ENCODE measurements at regions of chr12 and their contacts with region 1.

Region 1: DNA sequence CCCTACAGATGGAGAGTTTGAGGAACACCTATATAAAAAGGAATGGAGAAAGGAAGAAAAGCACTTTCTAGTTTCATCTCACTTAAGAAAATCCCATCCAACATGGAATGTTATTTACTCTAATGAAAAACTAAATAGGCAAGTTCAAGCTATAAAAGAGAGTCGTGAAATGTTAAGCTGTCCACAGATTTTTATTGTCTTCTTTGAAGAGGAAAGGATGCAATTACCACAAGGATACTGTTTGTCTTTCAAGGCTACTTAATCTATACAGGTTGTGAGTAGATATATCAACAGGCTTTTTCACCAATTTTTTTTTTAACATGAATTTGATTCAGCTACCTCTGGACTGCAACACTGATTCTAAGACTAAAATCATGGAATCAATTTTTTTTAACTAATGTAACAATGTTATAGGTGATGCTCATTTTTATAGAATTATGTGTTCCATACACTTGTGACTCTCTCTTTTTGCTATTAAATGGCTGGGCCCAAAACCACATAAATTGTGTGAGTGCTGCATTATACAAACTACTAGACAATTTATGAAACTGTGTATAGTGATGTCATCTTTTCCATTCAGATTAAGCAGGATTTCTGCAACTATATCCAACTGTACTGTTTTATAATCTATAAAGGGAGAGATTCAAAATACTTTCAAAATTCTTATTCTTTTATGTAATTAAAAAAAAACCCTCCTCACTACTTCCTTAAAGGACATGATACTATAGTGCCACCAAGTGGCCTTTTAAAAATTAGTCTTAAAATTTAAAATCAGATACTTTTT is 26.8 kb upstream of the BMAL2 start:
- DNase-seq: no peak
- H3K4me3 ChIP-seq: no peak overlapping the region
- H3K27ac ChIP-seq: no peak overlapping the region
- H3K4me1 ChIP-seq: no peaks in the 10 kb centered on the region
- H3K27me3 ChIP-seq: no peaks in the 10 kb centered on the region
- CTCF ChIP-seq: peak in 1 of 3 experiments; percentile 21; a peak in 1 of 4 replicates
- EP300 ChIP-seq: no peak
- POLR2A ChIP-seq: no peak
- RAD21 ChIP-seq: peak in 1 of 2 experiments; percentile 41; a peak in 3 of 4 replicates

Region 2: GRCh38 chr12:26691234-26691970 is 614.5 kb before region 1 on chr12:
- CTCF ChIA-PET with region 1: no interaction called
- POLR2A ChIA-PET with region 1: no interaction called
- DNase-seq: peak in 1 of 2 experiments; percentile 51
- H3K4me3 ChIP-seq: no peak overlapping the region
- H3K27ac ChIP-seq: no peak overlapping the region; the same call in 1 of the 2 replicates
- H3K4me1 ChIP-seq: peaks cover 0 to 8% (median 6%) of the 10 kb centered on the region in 4 experiments; a peak in 4 of 7 replicates
- H3K27me3 ChIP-seq: no peaks in the 10 kb centered on the region
- CTCF ChIP-seq: no peak
- EP300 ChIP-seq: 0 out of 3 replicates have a peak, but pooled peaks of 1 of the 2 experiments have one; percentile 43
- POLR2A ChIP-seq: no peak
- RAD21 ChIP-seq: no peak

Region 3: DNA sequence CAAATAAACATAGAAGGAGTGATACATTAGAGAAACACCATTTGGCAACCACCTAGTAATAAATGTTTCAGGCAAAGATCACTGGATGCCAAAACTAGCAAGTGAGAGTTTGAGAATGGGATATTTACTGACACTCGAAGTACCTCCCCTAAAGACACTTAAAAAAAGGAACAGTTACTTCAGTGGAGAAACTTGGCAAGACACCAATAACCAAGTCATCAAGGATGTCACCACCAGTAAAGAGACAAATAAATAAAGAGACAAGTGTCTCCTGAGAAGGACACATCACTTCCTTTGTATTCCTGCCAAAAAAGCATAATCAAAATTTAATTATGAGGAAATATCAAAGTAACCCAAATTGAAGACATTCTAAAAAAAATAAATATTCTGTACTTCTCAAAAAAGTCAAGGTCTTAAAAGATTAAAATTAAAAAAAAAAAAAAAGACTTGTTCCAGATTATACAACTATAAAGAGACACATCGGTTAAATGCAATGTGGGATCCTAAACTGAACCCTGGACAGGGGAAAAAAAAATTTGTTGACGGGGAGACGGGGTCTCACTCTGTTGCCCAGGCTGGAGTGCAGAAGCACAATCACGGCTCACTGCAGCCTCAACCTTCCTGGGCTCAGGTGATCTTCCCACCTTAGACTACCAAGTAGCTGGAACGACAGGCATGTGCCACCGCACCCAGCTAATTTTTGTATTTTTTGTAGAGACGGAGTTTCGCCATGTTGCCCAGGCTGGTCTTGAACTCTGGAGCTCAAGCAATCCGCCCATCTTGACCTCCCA is 318.0 kb before region 1 on chr12:
- CTCF ChIA-PET with region 1: no interaction called
- POLR2A ChIA-PET with region 1: no interaction called
- DNase-seq: no peak
- H3K4me3 ChIP-seq: no peak overlapping the region
- H3K27ac ChIP-seq: no peak overlapping the region
- H3K4me1 ChIP-seq: no peaks in the 10 kb centered on the region
- H3K27me3 ChIP-seq: no peaks in the 10 kb centered on the region
- CTCF ChIP-seq: no peak
- EP300 ChIP-seq: no peak
- POLR2A ChIP-seq: no peak
- RAD21 ChIP-seq: no peak

Region 4: GRCh38 chr12:27233814-27234213 is 72.1 kb before region 1 on chr12:
- CTCF ChIA-PET with region 1: interaction called, 12 read pairs
- POLR2A ChIA-PET with region 1: no interaction called
- DNase-seq: no peak
- H3K4me3 ChIP-seq: no peak overlapping the region
- H3K27ac ChIP-seq: no peak overlapping the region
- H3K4me1 ChIP-seq: no peaks in the 10 kb centered on the region
- H3K27me3 ChIP-seq: no peaks in the 10 kb centered on the region
- CTCF ChIP-seq: peak; percentile 35 to 54 (median 39); a peak in 3 of 4 replicates
- EP300 ChIP-seq: no peak
- POLR2A ChIP-seq: no peak
- RAD21 ChIP-seq: peak; percentile 35 to 54; a peak in 3 of 4 replicates

Region 5: DNA sequence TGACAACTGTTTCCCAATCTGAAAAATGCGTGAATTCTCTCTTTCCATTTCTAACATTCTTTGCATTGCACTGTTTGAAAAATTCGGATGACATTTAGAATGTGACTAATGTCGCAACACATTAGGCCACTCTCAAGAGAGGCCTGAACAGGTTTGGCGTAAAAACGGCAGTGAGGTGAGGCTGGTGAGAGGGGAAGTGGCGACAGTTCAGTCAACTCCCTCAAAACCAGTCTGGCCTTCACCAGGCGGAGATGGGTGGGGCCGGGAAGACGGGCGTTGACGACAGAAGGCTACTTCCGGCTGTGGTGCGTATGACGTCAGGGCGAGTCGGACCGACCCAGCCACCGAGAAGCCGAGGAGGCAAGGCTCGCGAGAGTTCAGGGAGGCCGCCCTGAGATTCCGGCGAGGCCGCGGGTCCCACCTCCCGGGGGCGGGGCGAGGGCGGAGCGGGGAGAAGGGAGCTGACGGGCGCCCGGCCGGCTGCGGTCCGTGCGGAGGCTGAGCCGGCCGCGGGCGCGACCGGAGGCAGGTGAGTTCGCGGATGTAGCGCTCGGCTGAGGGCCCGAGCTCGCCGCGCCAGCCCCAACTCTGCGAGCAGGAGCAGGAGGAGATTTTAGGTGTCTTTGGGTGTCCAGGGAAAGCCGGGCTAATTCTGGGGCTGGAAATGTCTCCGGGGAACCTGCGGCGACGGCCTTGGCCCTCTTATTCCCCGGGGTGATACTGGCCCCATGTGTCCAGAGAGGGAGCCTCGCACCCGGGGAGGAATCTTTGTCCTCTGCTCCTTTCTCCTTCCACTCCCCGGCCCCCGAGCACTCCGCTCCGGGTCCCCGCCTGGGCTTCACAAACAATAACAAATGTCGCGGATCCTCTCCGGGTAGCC is 61.8 kb before region 1 on chr12 and contains the start of gene STK38L:
- CTCF ChIA-PET with region 1: interaction called, 7 read pairs
- POLR2A ChIA-PET with region 1: interaction called, 10 read pairs
- DNase-seq: peak; percentile 82 to 99
- H3K4me3 ChIP-seq: peak within 1 kb of the TSS; percentile 89 to 92 (median 90)
- H3K27ac ChIP-seq: peak within 1 kb of the TSS; percentile 63; the same call in 1 of the 2 replicates
- H3K4me1 ChIP-seq: peaks cover 0 to 7% (median 1%) of the 10 kb centered on the region in 4 experiments; a peak in 2 of 7 replicates
- H3K27me3 ChIP-seq: no peaks in the 10 kb centered on the region
- CTCF ChIP-seq: peak in 1 of 3 experiments; percentile 11; a peak in 1 of 4 replicates
- EP300 ChIP-seq: no peak; a peak in 1 of 3 replicates
- POLR2A ChIP-seq: peak; percentile 73 to 94
- RAD21 ChIP-seq: peak; percentile 13 to 23; a peak in 2 of 4 replicates
- total RNA-seq, gene STK38L: 63.6 and 68.8 TPM in 2 replicates

Region 6: GRCh38 chr12:27324530-27324929 is 18.7 kb after region 1 on chr12:
- CTCF ChIA-PET with region 1: interaction called, 10 read pairs
- POLR2A ChIA-PET with region 1: no interaction called
- DNase-seq: no peak
- H3K4me3 ChIP-seq: no peak overlapping the region
- H3K27ac ChIP-seq: no peak overlapping the region
- H3K4me1 ChIP-seq: peaks cover 0 to 5% (median 4%) of the 10 kb centered on the region in 4 experiments; a peak in 5 of 7 replicates
- H3K27me3 ChIP-seq: no peaks in the 10 kb centered on the region
- CTCF ChIP-seq: no peak
- EP300 ChIP-seq: no peak
- POLR2A ChIP-seq: no peak
- RAD21 ChIP-seq: no peak

Measured in H1 (cell line).